Activated CD4-positive, alpha-beta T cell treated with anti-CD3 and anti-CD28 coated beads for 36 hours (primary cell): ENCODE measurements at regions of chr19 and their contacts with region 1.

Region 1: GRCh38 chr19:51393959-51394836 is 3.8 kb upstream of the C19orf84 start:
- DNase-seq: peak; percentile 99
- ATAC-seq: peak; percentile 88
- H3K4me3 Mint-ChIP-seq: peak overlapping the region; percentile 91
- H3K27ac Mint-ChIP-seq: peak overlapping the region; percentile 96
- H3K4me1 Mint-ChIP-seq: peaks cover 44% of the 10 kb centered on the region
- H3K27me3 Mint-ChIP-seq: no peaks in the 10 kb centered on the region

Region 2: GRCh38 chr19:50817941-50818858 is 576.0 kb before region 1 on chr19:
- CTCF ChIA-PET with region 1: no interaction called
- POLR2A ChIA-PET with region 1: no interaction called
- intact Hi-C with region 1: loop called in 1 of 2 experiments (anchors 10 kb)
- DNase-seq: peak; percentile 82
- ATAC-seq: peak; percentile 59
- H3K4me3 Mint-ChIP-seq: peak overlapping the region; percentile 73
- H3K27ac Mint-ChIP-seq: peak overlapping the region; percentile 83
- H3K4me1 Mint-ChIP-seq: peaks cover 45% of the 10 kb centered on the region
- H3K27me3 Mint-ChIP-seq: peaks cover 61% of the 10 kb centered on the region

Region 3: GRCh38 chr19:51367565-51368365 is 26.4 kb before region 1 on chr19:
- CTCF ChIA-PET with region 1: interaction called, 6 read pairs
- POLR2A ChIA-PET with region 1: interaction called, 11 read pairs
- intact Hi-C with region 1: loop called in 1 of 2 experiments (anchors 1 kb)
- DNase-seq: peak; percentile 99
- ATAC-seq: peak; percentile 83
- H3K4me3 Mint-ChIP-seq: peak overlapping the region; percentile 90
- H3K27ac Mint-ChIP-seq: peak overlapping the region; percentile 97
- H3K4me1 Mint-ChIP-seq: peaks cover 58% of the 10 kb centered on the region
- H3K27me3 Mint-ChIP-seq: no peaks in the 10 kb centered on the region

Region 4: GRCh38 chr19:51441410-51442390 is 47.5 kb after region 1 on chr19:
- CTCF ChIA-PET with region 1: interaction called, 21 read pairs
- POLR2A ChIA-PET with region 1: interaction called, 10 read pairs
- intact Hi-C with region 1: loop called (anchors 1 kb)
- DNase-seq: peak; percentile 96
- ATAC-seq: peak; percentile 91
- H3K4me3 Mint-ChIP-seq: peak overlapping the region; percentile 72
- H3K27ac Mint-ChIP-seq: peak overlapping the region; percentile 95
- H3K4me1 Mint-ChIP-seq: peaks cover 67% of the 10 kb centered on the region
- H3K27me3 Mint-ChIP-seq: no peaks in the 10 kb centered on the region

Region 5: GRCh38 chr19:51660975-51661600 is 266.9 kb after region 1 on chr19:
- CTCF ChIA-PET with region 1: interaction called, 12 read pairs
- POLR2A ChIA-PET with region 1: no interaction called
- intact Hi-C with region 1: loop called in 1 of 2 experiments (anchors 1 kb)
- DNase-seq: peak; percentile 86
- ATAC-seq: peak; percentile 66
- H3K4me3 Mint-ChIP-seq: no peak overlapping the region
- H3K27ac Mint-ChIP-seq: no peak overlapping the region
- H3K4me1 Mint-ChIP-seq: peaks cover 5% of the 10 kb centered on the region
- H3K27me3 Mint-ChIP-seq: peaks cover 28% of the 10 kb centered on the region